HepG2 (cell line): ENCODE measurements at regions of chr9 and their contacts with region 1.

Region 1: GRCh38 chr9:19048966-19049916 is at the start of gene RRAGA:
- DNase-seq: peak; percentile 98
- ATAC-seq: peak; percentile 91
- H3K4me3 ChIP-seq: peak within 1 kb of the TSS; percentile 78 to 92 (median 87)
- H3K27ac ChIP-seq: peak within 1 kb of the TSS; percentile 91
- H3K4me1 ChIP-seq: peaks cover 27% of the 10 kb centered on the region
- H3K27me3 ChIP-seq: peaks cover 0 to 7% of the 10 kb centered on the region in 2 experiments; a peak in 1 of 5 replicates
- CTCF ChIP-seq: peak; percentile 98
- EP300 ChIP-seq: peak; percentile 9 to 53; a peak in 2 of 4 replicates
- POLR2A ChIP-seq: peak; percentile 82 to 92
- RAD21 ChIP-seq: peak; percentile 83
- total RNA-seq, gene RRAGA: 37.5 and 56.9 TPM in 2 replicates

Region 2: DNA sequence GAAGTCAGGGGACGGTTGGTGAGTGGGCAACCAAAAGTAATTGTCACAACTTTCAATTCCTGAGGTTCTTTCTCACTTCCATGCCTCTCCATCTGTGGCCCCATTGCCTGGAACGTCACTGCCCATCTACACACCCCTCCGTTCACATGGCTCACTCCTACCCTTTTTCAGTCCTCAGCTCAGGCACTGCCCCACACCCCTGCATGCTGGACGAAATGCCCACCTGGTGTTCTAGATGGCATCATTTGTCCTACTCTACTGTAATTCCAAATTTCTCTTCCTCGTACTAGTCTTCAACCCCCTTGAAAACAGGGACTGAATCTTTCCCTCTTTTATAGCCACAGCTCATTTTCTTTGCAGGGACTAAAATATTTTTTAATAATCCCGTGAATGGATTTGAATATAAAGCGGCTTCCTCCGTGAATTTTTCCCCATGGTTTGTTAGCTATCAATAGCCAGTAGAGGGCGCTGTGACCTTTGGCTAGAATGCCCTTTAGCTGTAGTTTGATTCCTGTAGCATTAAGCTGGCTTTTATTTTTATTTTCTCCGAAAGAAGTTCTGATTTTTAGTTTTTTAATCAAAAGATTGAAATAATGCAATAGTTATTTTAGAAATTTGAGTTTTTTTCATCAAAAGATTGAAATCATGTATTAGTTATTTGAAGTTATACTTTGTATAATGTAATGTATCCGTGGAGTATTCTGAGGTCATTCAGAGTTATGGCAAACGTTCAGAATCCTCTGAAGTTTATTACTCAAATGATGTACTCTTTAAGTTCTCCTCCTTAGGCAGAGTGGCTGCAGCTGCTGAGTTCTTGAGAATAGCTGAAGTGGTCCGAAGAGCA is 1238.3 kb before region 1 on chr9:
- CTCF ChIA-PET with region 1: no interaction called
- POLR2A ChIA-PET with region 1: no interaction called
- in situ Hi-C with region 1: loop called (anchors 25 kb)
- intact Hi-C with region 1: no loop called
- DNase-seq: peak; percentile 41
- ATAC-seq: peak; percentile 57; the same call in 1 of the 3 replicates
- H3K4me3 ChIP-seq: no peak overlapping the region
- H3K27ac ChIP-seq: no peak overlapping the region
- H3K4me1 ChIP-seq: no peaks in the 10 kb centered on the region
- H3K27me3 ChIP-seq: no peaks in the 10 kb centered on the region
- CTCF ChIP-seq: peak; percentile 65
- EP300 ChIP-seq: no peak
- POLR2A ChIP-seq: no peak
- RAD21 ChIP-seq: peak; percentile 34; the same call in 1 of the 2 replicates

Region 3: GRCh38 chr9:19154135-19154612 is 104.9 kb after region 1 on chr9:
- CTCF ChIA-PET with region 1: no interaction called
- POLR2A ChIA-PET with region 1: interaction called, 13 read pairs
- in situ Hi-C with region 1: no loop called
- intact Hi-C with region 1: no loop called
- DNase-seq: peak; percentile 92
- ATAC-seq: no peak; the same call in 2 of the 3 replicates
- H3K4me3 ChIP-seq: no peak overlapping the region; a peak in 1 of 6 replicates
- H3K27ac ChIP-seq: peak overlapping the region; percentile 83
- H3K4me1 ChIP-seq: peaks cover 98% of the 10 kb centered on the region
- H3K27me3 ChIP-seq: no peaks in the 10 kb centered on the region
- CTCF ChIP-seq: peak; percentile 34; the same call in 1 of the 2 replicates
- EP300 ChIP-seq: peak in 1 of 2 experiments; percentile 94; a peak in 2 of 4 replicates
- POLR2A ChIP-seq: no peak
- RAD21 ChIP-seq: no peak

Region 4: DNA sequence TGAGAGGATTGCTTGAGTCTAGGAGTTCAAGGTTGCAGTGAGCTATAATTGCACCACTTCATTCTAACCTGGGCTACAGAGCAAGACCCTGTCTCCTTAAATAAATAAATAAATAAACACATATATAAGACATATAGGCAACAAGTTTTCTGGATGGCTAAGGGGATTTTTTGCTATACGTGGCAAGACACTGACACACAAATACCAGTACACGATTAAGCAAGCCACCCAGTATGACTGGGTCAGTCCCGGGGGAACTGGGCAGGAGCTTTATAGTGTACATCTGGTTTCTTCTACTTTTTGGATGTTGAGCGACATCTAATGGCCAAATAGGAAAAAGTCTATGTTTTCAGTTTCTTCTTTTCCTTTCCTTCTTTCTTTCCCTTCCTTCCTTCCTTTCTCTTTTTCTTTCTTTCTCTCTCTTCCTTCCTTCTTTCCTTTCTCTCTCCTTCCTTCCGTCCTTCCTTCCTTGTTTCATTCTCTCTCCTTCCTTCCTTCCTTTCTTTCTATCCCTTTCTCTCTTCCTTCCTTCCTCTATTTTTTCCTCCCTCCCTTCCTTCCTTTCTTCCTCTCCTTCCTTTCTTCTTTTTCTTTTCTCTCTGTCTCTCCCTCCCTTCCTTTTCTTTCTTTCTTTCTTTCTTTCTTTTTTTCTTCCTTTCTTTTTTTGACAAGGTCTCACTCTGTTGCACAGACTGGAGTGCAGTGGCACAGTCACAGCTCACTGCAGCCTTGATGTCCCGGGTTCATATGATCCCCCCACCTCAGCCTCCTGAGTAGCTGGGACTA is 125.1 kb after region 1 on chr9:
- CTCF ChIA-PET with region 1: interaction called, 16 read pairs
- POLR2A ChIA-PET with region 1: interaction called, 22 read pairs
- in situ Hi-C with region 1: no loop called
- intact Hi-C with region 1: loop called (anchors 1 kb)
- DNase-seq: peak; percentile 79
- ATAC-seq: peak; percentile 93
- H3K4me3 ChIP-seq: peak overlapping the region in 1 of 3 experiments; percentile 27; a peak in 2 of 6 replicates
- H3K27ac ChIP-seq: peak overlapping the region; percentile 49
- H3K4me1 ChIP-seq: peaks cover 45% of the 10 kb centered on the region
- H3K27me3 ChIP-seq: no peaks in the 10 kb centered on the region
- CTCF ChIP-seq: peak; percentile 76
- EP300 ChIP-seq: no peak
- POLR2A ChIP-seq: no peak
- RAD21 ChIP-seq: peak; percentile 79

Region 5: GRCh38 chr9:19230356-19231125 is 181.3 kb after region 1 on chr9 and contains the start of gene DENND4C:
- CTCF ChIA-PET with region 1: no interaction called
- POLR2A ChIA-PET with region 1: interaction called, 8 read pairs
- in situ Hi-C with region 1: no loop called
- intact Hi-C with region 1: loop called (anchors 5 kb)
- DNase-seq: peak; percentile 85
- ATAC-seq: peak; percentile 94
- H3K4me3 ChIP-seq: peak within 1 kb of the TSS; percentile 88 to 92 (median 91)
- H3K27ac ChIP-seq: peak within 1 kb of the TSS; percentile 94
- H3K4me1 ChIP-seq: peaks cover 24% of the 10 kb centered on the region
- H3K27me3 ChIP-seq: no peaks in the 10 kb centered on the region; a peak in 1 of 5 replicates
- CTCF ChIP-seq: peak; percentile 56; the same call in 1 of the 2 replicates
- EP300 ChIP-seq: peak in 1 of 2 experiments; percentile 11; a peak in 1 of 4 replicates
- POLR2A ChIP-seq: peak; percentile 87 to 88
- RAD21 ChIP-seq: peak; percentile 60
- total RNA-seq, gene DENND4C: 27.2 and 37.8 TPM in 2 replicates

Region 6: DNA sequence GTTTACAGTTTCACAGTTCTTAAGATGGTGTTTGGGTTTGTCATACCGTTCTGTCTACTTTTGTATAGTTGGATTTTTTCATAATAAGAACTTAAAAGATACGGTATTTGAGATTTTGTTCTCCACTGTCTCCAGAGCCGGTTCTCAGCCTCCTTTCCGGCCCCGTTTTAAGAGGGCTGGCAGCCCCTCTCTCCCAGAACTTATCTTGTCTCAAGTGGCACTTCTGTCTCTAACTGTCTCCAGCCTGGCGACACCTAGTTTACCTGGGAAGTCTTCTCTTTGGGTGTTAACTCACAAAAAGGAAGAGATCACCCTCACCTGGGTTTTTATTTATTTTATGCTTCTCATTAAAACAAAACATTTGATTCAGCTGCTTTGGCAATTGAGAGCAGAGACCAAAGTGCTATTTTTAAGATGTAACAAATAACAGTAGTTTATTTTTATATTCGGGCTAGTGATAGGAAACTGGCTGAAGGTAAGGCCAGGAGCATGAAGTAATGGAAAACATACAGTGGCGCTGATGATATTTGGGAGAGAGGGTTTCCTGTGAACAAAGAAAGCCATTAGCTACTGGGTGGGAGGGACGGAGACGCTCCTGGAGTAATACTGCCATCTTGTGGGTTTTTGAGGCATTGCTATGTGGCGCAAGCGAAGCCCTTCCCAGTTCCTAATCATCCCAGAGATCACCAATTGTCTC is 407.9 kb after region 1 on chr9:
- CTCF ChIA-PET with region 1: no interaction called
- POLR2A ChIA-PET with region 1: no interaction called
- in situ Hi-C with region 1: loop called (anchors 10 kb)
- intact Hi-C with region 1: loop called (anchors 2 kb)
- DNase-seq: peak; percentile 66
- ATAC-seq: peak; percentile 95
- H3K4me3 ChIP-seq: peak overlapping the region in 2 of 3 experiments; percentile 30; a peak in 2 of 6 replicates
- H3K27ac ChIP-seq: no peak overlapping the region
- H3K4me1 ChIP-seq: peaks cover 5% of the 10 kb centered on the region; the same call in 1 of the 2 replicates
- H3K27me3 ChIP-seq: no peaks in the 10 kb centered on the region
- CTCF ChIP-seq: peak; percentile 92
- EP300 ChIP-seq: no peak
- POLR2A ChIP-seq: no peak
- RAD21 ChIP-seq: peak; percentile 91